ENCODE measurements at regions of chr5 and their contacts with region 1.

Region 1: DNA sequence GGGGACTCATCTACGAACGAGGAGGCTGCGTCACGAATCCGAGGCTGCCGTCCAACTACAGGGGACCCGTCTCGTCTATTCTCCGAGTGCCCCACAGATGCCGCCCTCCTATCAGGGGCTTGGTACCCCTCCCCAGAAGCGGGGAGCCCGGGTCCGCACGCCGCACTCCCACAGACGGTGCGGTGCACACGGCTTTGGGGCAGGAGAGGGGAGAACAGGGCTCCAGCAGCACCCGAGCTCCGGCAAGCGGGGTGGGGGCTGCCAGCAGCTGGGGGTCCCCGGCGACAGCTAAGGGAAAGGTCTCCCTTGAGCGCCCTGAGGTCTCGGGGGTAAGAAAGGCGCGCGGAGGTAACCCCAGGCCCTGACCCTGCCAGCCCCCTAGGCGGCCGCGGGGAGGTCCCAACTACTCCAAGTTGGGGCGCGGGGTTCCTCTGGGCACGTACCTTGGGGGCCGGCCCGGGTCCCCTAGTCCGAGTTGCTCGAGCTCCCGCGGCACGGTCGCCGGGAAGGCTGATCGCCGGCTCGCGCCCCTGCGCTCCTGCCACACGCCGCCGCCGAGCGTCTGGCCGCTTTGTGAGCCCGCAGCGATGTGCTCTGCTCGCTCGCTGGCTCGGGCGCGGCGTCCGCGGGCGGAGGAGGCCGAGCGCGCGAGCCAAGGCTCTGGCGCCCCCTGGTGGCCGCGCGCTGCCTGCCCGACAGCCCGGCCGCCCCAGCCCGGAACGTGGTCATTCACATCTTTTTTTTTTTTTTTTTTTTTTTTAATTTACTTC is at the start of gene SPOCK1:
- DNase-seq: peak; percentile 8
- H3K4me3 ChIP-seq: peak within 1 kb of the TSS; percentile 57
- H3K27me3 ChIP-seq: peaks cover 2% of the 10 kb centered on the region; the same call in 1 of the 2 replicates
- CTCF ChIP-seq: peak; percentile 49
- polyA plus RNA-seq, gene SPOCK1: 293 and 304 TPM in 2 replicates

Region 2: DNA sequence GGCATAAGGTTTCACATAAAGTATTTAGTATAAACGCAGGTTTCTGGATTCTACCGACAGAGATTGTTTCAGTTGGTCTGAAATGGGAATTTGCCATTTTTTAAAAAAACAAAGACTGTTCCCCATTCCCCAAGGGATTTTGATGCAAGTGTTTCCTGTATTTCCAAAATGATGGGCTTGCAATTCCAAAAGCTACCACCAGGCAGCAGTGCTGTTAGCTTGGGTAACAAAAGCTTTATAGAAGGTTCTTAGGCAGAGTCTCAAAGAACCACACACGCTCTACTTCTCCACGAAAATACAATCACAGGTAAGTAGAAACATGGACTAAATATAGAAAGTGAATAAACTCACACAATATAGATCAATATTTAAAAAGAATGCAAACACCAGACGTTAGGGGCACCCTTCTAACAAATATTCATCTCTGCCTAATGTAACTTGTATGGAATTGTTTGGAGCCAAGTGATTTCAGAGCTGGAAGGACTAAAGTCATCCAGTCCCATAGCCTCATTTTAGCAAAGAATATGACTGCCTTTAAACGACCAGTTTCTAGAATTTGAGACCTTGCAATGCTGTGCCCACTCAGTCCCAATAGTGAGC is 154.1 kb before region 1 on chr5:
- CTCF ChIA-PET with region 1: interaction called, 54 read pairs
- POLR2A ChIA-PET with region 1: no interaction called
- DNase-seq: no peak
- H3K4me3 ChIP-seq: no peak overlapping the region
- H3K27me3 ChIP-seq: no peaks in the 10 kb centered on the region
- CTCF ChIP-seq: peak; percentile 88

Region 3: GRCh38 chr5:137352095-137352494 is 146.8 kb before region 1 on chr5:
- CTCF ChIA-PET with region 1: interaction called, 25 read pairs
- POLR2A ChIA-PET with region 1: no interaction called
- DNase-seq: no peak
- H3K4me3 ChIP-seq: no peak overlapping the region
- H3K27me3 ChIP-seq: no peaks in the 10 kb centered on the region
- CTCF ChIP-seq: no peak